GM13976 (cell line): ENCODE measurements at regions of chr7 and their contacts with region 1.

Region 1: DNA sequence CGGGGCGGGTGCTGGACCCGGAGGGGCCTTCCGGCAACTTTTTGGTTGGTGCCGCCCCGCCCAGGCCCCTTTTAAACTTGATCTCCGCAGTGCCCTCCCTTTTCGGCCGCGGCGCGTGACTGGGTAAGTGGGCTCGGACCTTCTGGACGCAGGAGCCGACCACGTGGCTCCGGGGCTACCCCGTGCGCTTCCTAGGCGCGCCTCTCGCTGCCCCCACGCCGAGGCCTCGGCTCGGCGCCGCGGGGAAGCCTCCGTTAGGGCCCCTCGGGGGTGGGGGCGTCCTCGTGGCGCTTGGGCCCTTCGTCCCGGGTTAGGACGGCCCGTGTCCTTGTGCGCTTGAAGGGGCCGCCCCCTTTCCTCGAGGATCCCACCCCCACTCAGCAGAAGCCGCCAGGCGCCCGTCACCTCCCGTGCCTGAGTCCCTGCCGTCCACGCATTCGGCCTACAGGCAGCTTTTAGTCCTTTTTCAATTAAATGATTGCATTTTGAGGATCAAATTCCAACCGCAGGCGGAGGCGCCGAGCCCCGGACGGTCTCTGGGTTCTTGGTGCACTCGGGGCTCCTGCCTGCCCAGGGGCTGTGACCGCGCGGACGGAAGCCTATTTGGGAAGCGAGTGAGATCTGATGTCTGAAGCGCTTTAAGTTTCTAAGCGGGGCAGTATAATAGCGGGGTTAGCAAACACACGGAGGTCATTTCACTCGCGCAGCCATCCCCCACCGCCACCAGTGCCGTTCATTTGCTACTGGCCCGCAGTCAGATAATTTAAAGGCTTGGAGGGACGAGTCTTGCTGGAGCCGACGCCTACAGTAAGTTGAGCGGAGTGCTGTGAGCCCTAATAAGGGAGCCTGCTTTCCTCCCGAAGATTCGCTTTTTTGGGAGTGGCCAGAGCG is 31.8 kb upstream of the TOMM7 start:
- DNase-seq: peak; percentile 96
- CTCF ChIP-seq: no peak

Region 2: GRCh38 chr7:22238354-22239311 is 615.8 kb before region 1 on chr7:
- in situ Hi-C with region 1: no loop called
- DNase-seq: no peak
- CTCF ChIP-seq: no peak

Region 3: DNA sequence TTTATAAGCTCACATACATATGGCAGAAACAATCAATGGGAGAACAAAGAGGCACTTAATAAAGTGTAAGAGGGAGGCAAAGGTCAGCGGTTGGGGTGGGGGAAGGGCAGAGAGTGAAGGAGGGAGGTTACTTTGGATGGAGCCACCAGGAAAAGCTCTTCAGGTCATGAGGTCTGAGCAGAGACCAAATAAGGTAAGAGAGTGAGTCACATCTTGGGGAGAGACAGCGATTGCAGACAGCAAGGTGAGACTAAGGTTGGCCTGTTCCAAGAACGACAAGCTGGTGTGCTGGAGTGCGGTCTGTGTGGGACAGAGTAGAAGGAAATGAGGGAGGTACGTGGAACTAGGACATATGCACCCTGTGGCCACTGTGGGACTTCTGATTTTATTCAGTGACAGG is 42.5 kb after region 1 on chr7:
- in situ Hi-C with region 1: no loop called
- DNase-seq: no peak
- CTCF ChIP-seq: no peak

Region 4: DNA sequence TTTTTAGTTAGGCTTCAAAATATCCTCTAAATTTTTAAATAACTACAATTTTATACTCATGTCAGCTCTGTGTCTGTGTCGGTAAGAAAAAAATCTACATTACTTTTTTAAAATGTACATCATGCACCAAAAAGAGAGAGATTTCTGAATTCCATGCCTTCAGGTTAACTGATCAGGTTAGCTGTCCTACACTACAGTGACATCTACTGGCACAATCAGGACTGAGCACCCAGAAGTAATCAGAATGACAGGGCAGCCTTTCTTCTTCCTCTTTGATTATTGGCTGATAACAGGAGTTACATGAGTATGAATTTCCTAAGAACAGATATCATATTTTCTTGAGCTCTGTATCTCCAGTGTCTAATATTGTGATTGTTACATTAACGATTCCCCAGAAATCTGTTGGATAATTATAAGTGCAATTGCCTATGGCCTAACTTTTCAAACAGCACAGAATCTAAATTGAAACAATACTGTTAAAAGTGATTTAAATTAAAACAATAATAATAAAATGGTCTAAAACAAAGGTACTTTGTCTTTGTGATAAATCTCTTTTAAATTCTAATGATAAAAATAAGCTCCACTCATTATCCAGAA is 201.3 kb after region 1 on chr7:
- in situ Hi-C with region 1: loop called (anchors 10 kb)
- DNase-seq: peak; percentile 62
- CTCF ChIP-seq: peak; percentile 76